ENCODE measurements at regions of chr12 and their contacts with region 1.

Region 1: DNA sequence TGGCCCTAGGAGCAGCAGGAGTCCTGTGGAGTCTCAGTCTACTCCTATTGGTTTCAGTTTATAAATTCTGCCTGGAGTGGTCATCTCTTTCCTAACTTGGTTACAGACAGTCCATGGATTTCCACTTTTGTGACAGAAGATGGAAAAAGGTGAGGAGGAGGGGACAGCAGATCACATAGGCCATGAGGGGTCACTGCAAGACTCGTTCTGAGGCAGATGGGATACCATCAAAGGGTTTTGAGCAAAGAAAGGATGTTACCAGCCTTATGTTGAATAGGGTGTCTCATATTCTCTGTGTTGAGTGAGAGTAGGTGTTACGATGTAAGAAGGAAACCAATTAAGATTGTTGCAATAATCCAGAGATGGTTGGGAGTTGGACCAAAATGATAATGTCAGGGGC is 15.3 kb downstream of the PDE3A start:
- DNase-seq: no peak
- H3K4me3 ChIP-seq: no peak overlapping the region
- H3K27ac ChIP-seq: no peak overlapping the region
- H3K4me1 ChIP-seq: no peaks in the 10 kb centered on the region
- H3K27me3 ChIP-seq: no peaks in the 10 kb centered on the region
- CTCF ChIP-seq: no peak
- EP300 ChIP-seq: no peak
- POLR2A ChIP-seq: no peak

Region 2: DNA sequence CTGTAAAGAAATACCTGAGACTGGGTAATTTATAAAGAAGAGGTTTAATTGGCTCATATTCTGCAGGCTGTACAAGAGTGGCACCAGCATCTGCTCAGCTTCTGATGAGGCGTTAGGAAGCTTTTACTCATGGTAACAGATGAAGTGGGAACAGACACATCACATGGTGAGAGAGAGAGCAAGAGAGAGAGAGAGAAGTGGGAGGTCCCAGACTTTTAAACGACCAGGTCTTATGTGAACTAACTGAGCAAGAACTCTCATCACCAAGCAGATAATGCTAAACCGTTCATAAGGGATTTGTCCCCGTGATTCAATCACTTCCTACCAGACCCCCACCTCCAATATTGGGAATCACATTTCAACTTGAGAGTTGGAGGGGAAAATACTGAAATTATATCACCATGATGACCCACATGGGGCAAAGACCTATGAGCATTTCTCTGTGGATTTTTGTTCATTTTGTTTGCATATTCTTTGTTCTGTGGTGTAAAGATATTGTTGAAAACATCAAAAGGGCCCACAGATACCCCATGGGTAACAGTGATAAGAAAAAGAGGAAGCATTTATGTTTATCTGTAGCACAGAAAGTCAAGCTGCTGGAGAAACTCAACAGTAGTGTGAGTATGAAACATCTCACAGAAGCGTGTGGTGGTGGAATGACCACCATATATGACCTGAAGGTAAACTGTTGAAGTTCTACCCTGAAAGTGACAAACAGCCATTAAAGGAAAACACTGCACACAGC is 150.5 kb before region 1 on chr12:
- intact Hi-C with region 1: loop called in 1 of 4 experiments (anchors 10 kb)
- DNase-seq: no peak
- H3K4me3 ChIP-seq: no peak overlapping the region
- H3K27ac ChIP-seq: no peak overlapping the region
- H3K4me1 ChIP-seq: no peaks in the 10 kb centered on the region
- H3K27me3 ChIP-seq: no peaks in the 10 kb centered on the region
- CTCF ChIP-seq: no peak
- EP300 ChIP-seq: no peak
- POLR2A ChIP-seq: no peak

Region 3: GRCh38 chr12:20520532-20520931 is 136.9 kb after region 1 on chr12:
- intact Hi-C with region 1: no loop called
- DNase-seq: peak in 1 of 5 donors; percentile 12
- H3K4me3 ChIP-seq: no peak overlapping the region
- H3K27ac ChIP-seq: no peak overlapping the region
- H3K4me1 ChIP-seq: no peaks in the 10 kb centered on the region
- H3K27me3 ChIP-seq: no peaks in the 10 kb centered on the region
- CTCF ChIP-seq: no peak
- EP300 ChIP-seq: no peak
- POLR2A ChIP-seq: no peak

Region 4: DNA sequence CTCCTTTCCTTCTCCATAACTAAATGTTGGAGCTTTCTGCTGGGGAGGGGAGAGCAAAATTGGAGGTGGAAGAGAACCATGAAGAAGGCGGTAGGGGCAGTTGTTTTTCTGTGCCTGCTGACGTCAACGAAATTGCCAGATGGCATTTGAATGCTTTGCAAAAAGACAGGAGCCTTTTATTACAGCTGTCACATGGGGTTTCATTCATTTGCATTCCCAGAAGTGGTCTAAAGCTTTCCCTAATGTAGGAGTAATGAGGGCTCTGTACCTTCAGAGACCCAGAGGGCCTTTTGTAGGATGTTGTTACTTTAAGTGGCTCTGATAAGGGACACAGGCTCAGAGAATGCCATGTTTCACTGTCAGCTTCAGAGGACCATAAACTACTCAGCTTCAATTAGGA is 204.4 kb after region 1 on chr12:
- intact Hi-C with region 1: no loop called
- DNase-seq: no peak
- H3K4me3 ChIP-seq: no peak overlapping the region
- H3K27ac ChIP-seq: no peak overlapping the region
- H3K4me1 ChIP-seq: no peaks in the 10 kb centered on the region
- H3K27me3 ChIP-seq: no peaks in the 10 kb centered on the region
- CTCF ChIP-seq: no peak
- EP300 ChIP-seq: no peak
- POLR2A ChIP-seq: no peak

Measured in ovary (tissue), 10 donors.